Psoas muscle (tissue), 8 donors: ENCODE measurements at regions of chr2 and their contacts with region 1.

Region 1: GRCh38 chr2:74178201-74179062 is at the start of gene MOB1A:
- DNase-seq: peak; percentile 97 to 98
- ATAC-seq: peak; percentile 99
- H3K4me3 ChIP-seq: peak within 1 kb of the TSS; percentile 78
- H3K27ac ChIP-seq: peak within 1 kb of the TSS; percentile 79
- H3K4me1 ChIP-seq: peaks cover 23% of the 10 kb centered on the region
- H3K27me3 ChIP-seq: no peaks in the 10 kb centered on the region
- CTCF ChIP-seq: no peak
- total RNA-seq, gene MOB1A: 28.0 to 44.3 (median 28.9) TPM

Region 2: DNA sequence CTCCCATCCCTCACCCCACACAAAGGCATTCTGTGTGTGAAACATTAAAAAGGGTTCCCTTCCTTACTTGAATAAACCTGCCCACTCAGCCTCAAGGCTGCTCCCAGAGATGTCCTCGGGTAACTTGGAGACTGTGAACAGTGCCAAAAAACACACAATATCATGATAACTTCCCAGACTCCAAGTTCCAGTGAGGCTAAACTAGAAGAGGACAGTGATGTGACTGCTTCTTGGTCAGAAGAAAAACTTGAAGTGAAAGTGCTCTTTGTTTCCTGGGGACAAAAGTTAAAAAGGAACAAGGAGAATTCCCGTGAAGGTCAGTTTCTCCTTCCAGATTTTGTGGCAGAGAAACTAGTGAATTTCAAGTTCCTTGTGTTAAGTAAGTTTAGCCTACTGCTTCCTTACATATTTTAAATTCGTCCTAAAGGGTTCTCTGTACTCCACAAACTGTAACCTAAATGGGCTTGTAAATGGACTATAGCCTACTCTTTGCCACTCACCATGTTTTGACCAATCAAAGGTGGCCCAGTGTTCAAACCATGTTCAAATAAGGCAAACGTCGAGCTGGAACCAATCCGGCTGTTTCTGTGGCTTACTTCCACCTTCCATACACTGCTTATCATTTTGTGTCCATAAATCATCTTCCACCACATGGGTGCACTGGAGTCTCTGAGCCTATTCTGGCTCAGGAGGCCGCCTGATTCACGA is 461.7 kb before region 1 on chr2:
- intact Hi-C with region 1: no loop called
- DNase-seq: no peak
- ATAC-seq: no peak
- H3K4me3 ChIP-seq: no peak overlapping the region
- H3K27ac ChIP-seq: no peak overlapping the region
- H3K4me1 ChIP-seq: no peaks in the 10 kb centered on the region
- H3K27me3 ChIP-seq: no peaks in the 10 kb centered on the region
- CTCF ChIP-seq: no peak

Region 3: GRCh38 chr2:74198461-74199274 is 20.2 kb after region 1 on chr2 and contains the start of gene MTHFD2:
- intact Hi-C with region 1: loop called in 1 of 2 experiments (anchors 2 kb)
- DNase-seq: peak; percentile 92 to 94
- ATAC-seq: peak; percentile 91 to 94 (median 92)
- H3K4me3 ChIP-seq: peak within 1 kb of the TSS; percentile 79
- H3K27ac ChIP-seq: peak within 1 kb of the TSS; percentile 91
- H3K4me1 ChIP-seq: peaks cover 30% of the 10 kb centered on the region
- H3K27me3 ChIP-seq: no peaks in the 10 kb centered on the region
- CTCF ChIP-seq: peak; percentile 69
- total RNA-seq, gene MTHFD2: 16.6 to 76.2 (median 61.2) TPM